ENCODE measurements at regions of chr2 and their contacts with region 1.

Region 1: DNA sequence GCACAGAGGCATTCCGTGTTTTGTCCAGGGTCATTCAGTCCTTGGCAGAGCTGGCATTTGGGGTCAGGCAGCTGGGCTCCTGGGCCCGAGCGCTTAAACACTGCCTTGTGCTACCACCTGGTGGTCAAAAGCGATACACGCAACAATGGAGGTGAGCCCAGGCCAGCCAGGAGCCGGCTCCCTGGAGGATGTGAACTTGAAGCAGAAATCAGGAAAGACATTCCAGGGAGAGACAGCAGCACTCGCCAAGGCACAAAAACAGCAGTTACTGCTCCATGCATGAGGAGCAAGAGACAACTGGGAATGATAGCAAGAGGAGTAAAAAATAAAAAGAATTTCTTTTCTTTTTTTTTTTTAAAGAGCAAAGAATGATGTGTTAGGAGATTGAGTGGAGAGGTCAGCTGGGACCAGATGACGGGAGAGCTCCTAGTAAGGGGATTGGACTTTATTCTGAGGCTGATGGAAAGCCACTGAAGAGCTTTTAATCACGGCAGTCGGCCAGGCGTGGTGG is 20.7 kb downstream of the SCYGR8 start:
- DNase-seq: peak; percentile 83
- H3K4me3 ChIP-seq: no peak overlapping the region
- H3K27ac ChIP-seq: no peak overlapping the region
- H3K4me1 ChIP-seq: peaks cover 6% of the 10 kb centered on the region
- H3K27me3 ChIP-seq: no peaks in the 10 kb centered on the region

Region 2: GRCh38 chr2:227125506-227125905 is 640.9 kb before region 1 on chr2:
- in situ Hi-C with region 1: loop called (anchors 25 kb)
- DNase-seq: no peak
- H3K4me3 ChIP-seq: no peak overlapping the region
- H3K27ac ChIP-seq: no peak overlapping the region
- H3K4me1 ChIP-seq: no peaks in the 10 kb centered on the region
- H3K27me3 ChIP-seq: no peaks in the 10 kb centered on the region

Region 3: GRCh38 chr2:227406177-227407031 is 360.0 kb before region 1 on chr2:
- in situ Hi-C with region 1: loop called (anchors 5 kb)
- DNase-seq: peak; percentile 98
- H3K4me3 ChIP-seq: peak overlapping the region; percentile 50
- H3K27ac ChIP-seq: peak overlapping the region; percentile 98
- H3K4me1 ChIP-seq: peaks cover 30% of the 10 kb centered on the region
- H3K27me3 ChIP-seq: no peaks in the 10 kb centered on the region

Measured in GM23248 (cell line).